ENCODE measurements at regions of chr4 and their contacts with region 1.

Region 1: DNA sequence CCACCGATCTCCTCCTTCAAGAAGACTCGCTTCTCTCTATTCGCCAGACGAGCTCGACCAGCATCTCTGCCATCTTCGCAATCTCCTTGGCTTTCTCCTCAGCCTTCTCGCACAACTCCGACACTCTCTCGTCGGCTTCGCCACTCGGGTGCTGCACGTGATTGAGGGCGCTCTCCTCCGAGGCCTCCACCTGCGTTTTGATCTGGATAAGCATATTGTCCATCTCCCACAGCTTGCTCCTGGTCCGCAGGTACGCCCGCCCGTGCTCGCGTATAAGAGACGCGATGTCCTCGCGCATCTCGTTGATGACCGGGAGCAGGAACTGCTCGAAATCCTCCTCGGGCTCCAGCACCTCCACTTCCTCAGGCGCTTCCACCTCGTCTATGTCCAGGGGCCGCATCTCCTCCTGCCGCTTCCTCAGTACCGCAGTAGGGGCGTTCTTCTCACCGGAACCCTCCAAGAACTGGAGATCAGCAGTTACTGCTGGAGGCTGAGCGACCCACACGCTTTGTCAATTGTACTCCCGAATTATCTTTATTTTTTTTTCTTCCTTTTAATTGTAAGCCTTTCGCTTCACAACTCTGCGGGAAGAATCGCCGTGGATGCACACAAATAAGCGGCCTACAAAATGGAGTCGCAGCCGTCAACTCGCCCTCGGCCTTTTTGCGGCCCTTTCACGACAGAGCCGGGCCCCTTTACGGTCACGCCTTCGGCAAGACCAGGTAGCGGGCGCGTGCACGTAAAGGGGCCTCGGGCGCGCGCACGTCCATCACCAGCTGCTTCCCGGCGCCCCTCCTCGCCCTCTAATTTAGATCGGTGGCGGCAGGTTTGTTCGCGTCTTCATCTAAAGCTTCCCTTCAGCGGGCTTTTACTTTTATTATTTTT is at the start of gene MRFAP1L1:
- DNase-seq: peak; percentile 94 to 97 (median 96)
- H3K4me3 ChIP-seq: peak within 1 kb of the TSS; percentile 81
- H3K27ac ChIP-seq: peak within 1 kb of the TSS; percentile 59 to 63
- H3K4me1 ChIP-seq: peaks cover 17% of the 10 kb centered on the region
- H3K27me3 ChIP-seq: no peaks in the 10 kb centered on the region
- CTCF ChIP-seq: no peak
- EP300 ChIP-seq: no peak
- POLR2A ChIP-seq: peak; percentile 51
- total RNA-seq, gene MRFAP1L1: 59.3 to 73.6 (median 65.3) TPM

Region 2: DNA sequence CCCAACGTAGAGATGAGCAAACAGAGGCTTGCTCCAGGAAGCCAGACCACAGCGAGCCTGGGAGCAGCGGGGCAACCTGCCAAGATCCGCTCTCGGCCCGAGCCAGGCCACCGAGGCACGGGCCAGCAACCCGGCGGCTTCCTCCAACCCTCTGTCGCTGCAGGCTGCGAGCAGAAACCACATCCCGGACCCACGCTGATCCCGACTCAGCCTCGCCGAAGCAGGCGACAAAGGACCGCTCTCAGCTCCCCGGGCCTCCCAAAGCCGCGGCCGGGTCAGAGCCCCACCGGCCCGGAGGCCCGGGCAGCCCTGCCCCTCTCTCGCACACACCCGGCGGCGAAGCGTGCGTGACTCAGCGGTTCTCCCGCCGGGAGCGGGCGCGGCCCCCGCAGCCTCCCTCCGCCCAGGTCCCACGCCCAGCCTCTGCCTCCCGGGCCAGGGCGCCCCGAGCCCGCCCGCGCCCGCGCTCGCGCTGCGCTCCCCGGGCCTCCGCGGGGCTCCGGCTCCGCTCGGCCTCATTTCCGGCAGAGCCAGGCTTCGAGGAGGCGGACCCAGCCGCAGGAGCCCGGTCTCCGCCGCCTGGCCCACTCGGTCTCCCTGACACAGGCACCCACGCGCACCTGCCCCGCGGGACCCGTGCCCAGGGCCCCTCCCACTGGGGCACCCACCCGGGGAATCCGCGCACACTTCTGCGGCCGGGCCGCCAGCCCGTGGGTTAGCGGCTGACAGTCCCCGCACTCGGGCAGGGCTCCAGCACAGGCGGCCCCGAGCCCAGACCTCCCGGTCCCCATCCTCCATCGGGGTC is 238.8 kb before region 1 on chr4:
- intact Hi-C with region 1: no loop called
- DNase-seq: peak; percentile 25 to 63 (median 40)
- H3K4me3 ChIP-seq: peak overlapping the region; percentile 45
- H3K27ac ChIP-seq: no peak overlapping the region
- H3K4me1 ChIP-seq: no peaks in the 10 kb centered on the region
- H3K27me3 ChIP-seq: no peaks in the 10 kb centered on the region
- CTCF ChIP-seq: no peak
- EP300 ChIP-seq: no peak
- POLR2A ChIP-seq: no peak

Region 3: DNA sequence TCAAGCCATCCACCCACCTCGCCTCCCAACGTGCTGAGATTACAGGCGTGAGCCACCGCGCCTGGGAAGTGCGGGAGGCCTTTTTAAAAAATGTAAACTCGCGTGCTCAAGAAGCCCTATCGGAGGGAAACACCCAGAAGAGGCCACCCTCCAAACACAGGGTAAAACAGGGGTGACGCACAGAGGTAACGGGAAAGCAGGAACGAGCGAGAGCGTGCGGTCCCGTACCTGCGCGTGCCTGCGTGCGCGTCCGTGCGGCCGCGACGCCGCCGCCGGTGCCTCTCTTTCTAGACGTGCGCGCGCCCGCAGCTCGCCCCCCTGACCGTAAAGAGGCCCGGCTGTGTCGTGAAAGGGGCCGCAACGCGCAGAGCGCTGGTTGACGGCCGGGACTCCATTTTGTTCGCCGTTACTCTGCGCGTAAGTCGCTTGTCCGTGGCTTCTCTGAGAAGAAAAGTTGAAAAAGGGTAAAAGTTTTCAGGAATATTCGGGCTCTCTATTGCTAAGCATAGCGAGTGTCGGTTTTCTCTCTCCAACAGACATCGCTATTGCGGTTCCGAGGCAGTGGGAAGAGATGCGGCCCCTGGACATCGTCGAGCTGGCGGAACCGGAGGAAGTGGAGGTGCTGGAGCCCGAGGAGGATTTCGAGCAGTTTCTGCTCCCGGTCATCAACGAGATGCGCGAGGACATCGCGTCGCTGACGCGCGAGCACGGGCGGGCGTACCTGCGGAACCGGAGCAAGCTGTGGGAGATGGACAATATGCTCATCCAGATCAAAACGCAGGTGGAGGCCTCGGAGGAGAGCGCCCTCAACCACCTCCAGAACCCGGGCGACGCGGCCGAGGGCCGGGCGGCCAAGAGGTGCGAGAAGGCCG is 68.9 kb before region 1 on chr4 and contains the start of gene MRFAP1:
- intact Hi-C with region 1: loop called in 2 of 4 experiments (anchors 5 to 10 kb)
- DNase-seq: peak; percentile 93 to 97 (median 94)
- H3K4me3 ChIP-seq: peak within 1 kb of the TSS; percentile 88
- H3K27ac ChIP-seq: peak within 1 kb of the TSS; percentile 71 to 85
- H3K4me1 ChIP-seq: peaks cover 11% of the 10 kb centered on the region
- H3K27me3 ChIP-seq: no peaks in the 10 kb centered on the region
- CTCF ChIP-seq: peak in 1 of 3 donors; percentile 21
- EP300 ChIP-seq: no peak
- POLR2A ChIP-seq: peak; percentile 93
- total RNA-seq, gene MRFAP1: 154 to 367 (median 300) TPM